ENCODE measurements at regions of chr17 and their contacts with region 1.

Region 1: DNA sequence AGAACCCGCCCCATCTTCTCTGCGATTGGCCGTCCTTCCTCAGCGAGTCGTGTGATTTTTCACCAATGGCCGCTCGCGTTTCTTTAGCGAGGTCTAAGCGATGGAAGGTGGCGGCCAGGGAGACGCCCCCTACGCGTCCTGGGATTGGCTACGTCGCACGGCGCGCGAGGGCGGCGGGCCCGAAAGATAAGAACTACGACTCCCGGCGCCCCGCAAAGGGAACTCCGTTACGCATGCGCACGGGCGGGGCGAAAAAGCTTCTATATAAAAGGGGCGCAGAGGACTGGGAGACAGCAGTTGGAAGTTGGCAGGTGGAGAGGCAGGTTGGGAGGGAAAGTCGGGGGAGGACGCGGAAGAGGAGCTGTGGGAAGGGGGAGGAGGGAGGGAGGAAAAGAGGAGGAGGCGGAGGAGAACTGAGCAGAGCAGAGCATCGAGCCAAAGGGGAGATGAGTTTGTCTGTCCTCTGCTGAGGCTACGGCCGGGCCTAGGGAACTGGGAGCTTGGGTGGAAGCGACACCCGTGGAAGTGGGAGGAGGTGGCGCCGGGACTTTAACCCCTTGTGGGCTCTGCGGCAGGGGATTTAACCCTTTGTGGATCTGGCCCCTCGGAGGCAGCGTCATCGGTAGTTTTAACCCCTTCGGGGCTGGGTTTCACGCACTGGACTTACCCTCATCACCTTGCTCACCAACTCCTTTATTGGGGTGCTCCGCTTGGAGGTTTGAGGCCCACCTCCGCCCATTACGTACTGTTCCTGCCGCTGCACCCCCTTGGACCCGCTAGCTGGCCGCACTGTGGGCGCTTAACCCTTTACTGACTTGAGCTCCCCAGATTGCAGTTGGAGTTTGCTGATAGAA is at the start of gene HEXIM1:
- DNase-seq: peak; percentile 97 to 100 (median 99)
- ATAC-seq: peak; percentile 77 to 83 (median 81)
- H3K4me3 ChIP-seq: peak within 1 kb of the TSS; percentile 76 to 99
- H3K4me3 Mint-ChIP-seq: peak within 1 kb of the TSS; percentile 93 to 100 (median 97)
- H3K27ac ChIP-seq: peak within 1 kb of the TSS; percentile 97
- H3K27ac Mint-ChIP-seq: peak within 1 kb of the TSS; percentile 99 to 100
- H3K4me1 ChIP-seq: peaks cover 31 to 73% of the 10 kb centered on the region in 2 experiments
- H3K4me1 Mint-ChIP-seq: peaks cover 59 to 67% (median 61%) of the 10 kb centered on the region in 3 donors
- H3K27me3 ChIP-seq: no peaks in the 10 kb centered on the region
- H3K27me3 Mint-ChIP-seq: peaks cover 0 to 2% of the 10 kb centered on the region in 2 donors
- total RNA-seq, gene HEXIM1: 32.3 to 55.9 (median 34.5) TPM

Region 2: GRCh38 chr17:45051060-45051719 is 97.2 kb before region 1 on chr17 and contains the start of gene DCAKD:
- CTCF ChIA-PET with region 1: no interaction called
- POLR2A ChIA-PET with region 1: interaction called in 1 of 2 experiments, 10 read pairs
- DNase-seq: peak; percentile 70 to 94 (median 81)
- ATAC-seq: peak; percentile 93 to 99 (median 96)
- H3K4me3 ChIP-seq: peak within 1 kb of the TSS; percentile 76 to 81
- H3K4me3 Mint-ChIP-seq: peak within 1 kb of the TSS; percentile 86 to 92 (median 87)
- H3K27ac ChIP-seq: peak within 1 kb of the TSS; percentile 85
- H3K27ac Mint-ChIP-seq: peak within 1 kb of the TSS; percentile 98
- H3K4me1 ChIP-seq: peaks cover 12 to 42% of the 10 kb centered on the region in 2 experiments
- H3K4me1 Mint-ChIP-seq: peaks cover 31 to 45% (median 43%) of the 10 kb centered on the region in 3 donors
- H3K27me3 ChIP-seq: no peaks in the 10 kb centered on the region
- H3K27me3 Mint-ChIP-seq: no peaks in the 10 kb centered on the region
- total RNA-seq, gene DCAKD: 18.7 to 40.7 (median 29.7) TPM

Region 3: GRCh38 chr17:45108595-45109521 is 39.6 kb before region 1 on chr17:
- CTCF ChIA-PET with region 1: no interaction called
- POLR2A ChIA-PET with region 1: interaction called in 1 of 2 experiments, 12 read pairs
- DNase-seq: no peak
- ATAC-seq: peak in 1 of 4 experiments; percentile 24
- H3K4me3 ChIP-seq: no peak overlapping the region
- H3K4me3 Mint-ChIP-seq: no peak overlapping the region
- H3K27ac ChIP-seq: no peak overlapping the region
- H3K27ac Mint-ChIP-seq: no peak overlapping the region
- H3K4me1 ChIP-seq: no peaks in the 10 kb centered on the region
- H3K4me1 Mint-ChIP-seq: no peaks in the 10 kb centered on the region
- H3K27me3 ChIP-seq: peaks cover 0 to 3% of the 10 kb centered on the region in 2 experiments
- H3K27me3 Mint-ChIP-seq: no peaks in the 10 kb centered on the region

Region 4: DNA sequence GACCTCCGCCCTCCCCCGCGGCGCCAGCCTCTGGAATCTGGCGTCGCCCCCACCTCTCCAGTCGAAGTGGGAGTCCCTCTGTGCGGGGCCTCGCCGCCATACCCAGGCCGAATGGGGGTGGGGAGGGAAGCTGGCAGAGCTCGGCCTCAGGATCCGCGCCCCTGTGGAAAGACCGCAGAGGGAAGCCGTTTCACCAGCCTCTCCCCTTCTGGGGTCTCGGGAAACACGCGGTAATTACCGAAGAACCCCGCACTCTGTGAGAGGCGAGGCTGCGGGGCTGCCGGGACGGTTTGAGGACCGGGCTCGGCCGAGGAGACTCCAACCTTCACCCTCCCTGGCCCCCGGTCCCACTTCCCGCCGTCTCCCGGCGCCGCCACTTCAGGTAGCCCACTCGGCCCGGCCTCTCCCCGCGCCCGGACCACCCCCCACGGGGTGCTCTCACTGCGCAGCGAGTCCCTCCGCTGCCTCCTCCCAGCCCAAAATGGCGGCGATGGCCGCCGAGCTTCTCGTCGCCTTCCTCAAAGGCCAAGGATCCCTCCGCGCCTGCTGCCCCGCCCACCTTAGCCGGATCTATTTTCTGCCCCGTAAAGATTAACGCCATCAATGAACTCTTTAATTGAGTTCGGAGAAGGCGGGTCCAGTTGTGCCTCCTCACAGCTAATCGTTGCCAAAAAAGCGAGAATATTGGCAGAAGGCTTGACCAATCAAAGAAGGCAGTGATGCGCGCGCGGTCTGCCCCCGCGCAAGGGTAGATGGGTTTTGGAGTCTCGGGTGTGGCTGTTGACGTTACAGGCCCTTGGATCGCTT is 12.8 kb after region 1 on chr17:
- CTCF ChIA-PET with region 1: interaction called, 3 to 121 read pairs
- POLR2A ChIA-PET with region 1: interaction called, 28 to 45 read pairs
- DNase-seq: peak; percentile 92 to 99 (median 98)
- ATAC-seq: peak; percentile 94 to 95 (median 94)
- H3K4me3 ChIP-seq: peak overlapping the region; percentile 90 to 94
- H3K4me3 Mint-ChIP-seq: peak overlapping the region; percentile 95 to 99 (median 96)
- H3K27ac ChIP-seq: peak overlapping the region; percentile 100
- H3K27ac Mint-ChIP-seq: peak overlapping the region; percentile 99
- H3K4me1 ChIP-seq: peaks cover 16 to 32% of the 10 kb centered on the region in 2 experiments
- H3K4me1 Mint-ChIP-seq: peaks cover 37 to 46% (median 44%) of the 10 kb centered on the region in 3 donors
- H3K27me3 ChIP-seq: no peaks in the 10 kb centered on the region
- H3K27me3 Mint-ChIP-seq: no peaks in the 10 kb centered on the region

Region 5: GRCh38 chr17:45197555-45198334 is 49.3 kb after region 1 on chr17:
- CTCF ChIA-PET with region 1: interaction called, 4 to 38 read pairs
- POLR2A ChIA-PET with region 1: interaction called, 3 to 17 read pairs
- DNase-seq: peak; percentile 56 to 92 (median 81)
- ATAC-seq: peak; percentile 98 to 99 (median 99)
- H3K4me3 ChIP-seq: no peak overlapping the region
- H3K4me3 Mint-ChIP-seq: no peak overlapping the region
- H3K27ac ChIP-seq: no peak overlapping the region
- H3K27ac Mint-ChIP-seq: no peak overlapping the region
- H3K4me1 ChIP-seq: peaks cover 0 to 7% of the 10 kb centered on the region in 2 experiments
- H3K4me1 Mint-ChIP-seq: peaks cover 0 to 5% (median 4%) of the 10 kb centered on the region in 3 donors
- H3K27me3 ChIP-seq: no peaks in the 10 kb centered on the region
- H3K27me3 Mint-ChIP-seq: no peaks in the 10 kb centered on the region

Region 6: DNA sequence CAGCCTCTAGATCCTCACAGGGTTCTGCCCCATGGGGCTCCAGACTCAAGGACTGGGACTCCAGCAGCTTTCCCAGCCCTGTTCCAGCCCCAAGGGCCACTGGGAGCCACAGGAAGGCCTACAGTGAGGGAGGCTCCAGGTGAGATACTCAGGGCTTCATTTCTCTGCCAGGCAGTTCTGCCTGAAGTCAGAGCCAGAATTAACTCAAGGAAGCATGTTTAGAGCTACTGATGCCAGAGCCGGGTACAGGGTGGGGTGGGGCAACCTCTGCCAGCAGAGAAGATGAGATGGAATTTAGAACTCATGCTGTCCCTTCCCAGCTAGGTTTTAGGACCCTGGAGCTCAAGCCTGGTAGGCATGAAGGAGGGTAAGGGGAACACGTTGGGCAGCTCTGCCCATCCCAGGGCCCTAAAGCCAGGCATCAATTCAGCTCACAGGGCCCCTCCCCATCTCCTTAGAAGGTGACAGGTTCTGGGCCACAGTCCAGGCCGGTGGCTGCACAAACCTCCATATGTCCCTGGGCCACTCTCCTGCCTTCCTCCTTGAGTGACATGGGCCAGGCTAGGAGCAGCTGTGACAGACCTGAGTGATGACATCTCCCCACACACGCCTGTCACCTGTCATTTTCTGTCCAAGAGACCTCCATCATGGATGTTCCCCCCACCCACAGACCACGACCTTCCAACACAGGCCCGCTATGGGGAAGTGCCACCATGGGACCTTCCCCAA is 671.8 kb after region 1 on chr17:
- CTCF ChIA-PET with region 1: no interaction called
- POLR2A ChIA-PET with region 1: interaction called in 1 of 2 experiments, 10 read pairs
- DNase-seq: no peak
- ATAC-seq: no peak
- H3K4me3 ChIP-seq: no peak overlapping the region
- H3K4me3 Mint-ChIP-seq: no peak overlapping the region
- H3K27ac ChIP-seq: no peak overlapping the region
- H3K27ac Mint-ChIP-seq: no peak overlapping the region
- H3K4me1 ChIP-seq: peaks cover 0 to 8% of the 10 kb centered on the region in 2 experiments
- H3K4me1 Mint-ChIP-seq: peaks cover 0 to 5% (median 2%) of the 10 kb centered on the region in 3 donors
- H3K27me3 ChIP-seq: peaks cover 0 to 26% of the 10 kb centered on the region in 2 experiments
- H3K27me3 Mint-ChIP-seq: peaks cover 0 to 4% of the 10 kb centered on the region in 2 donors

Measured in T-cell (primary cell).